H1 (cell line): ENCODE measurements at regions of chr11 and their contacts with region 1.

Region 1: GRCh38 chr11:22130462-22131053 is 62.3 kb upstream of the ANO5 start:
- DNase-seq: peak in 1 of 2 experiments; percentile 49
- H3K4me3 ChIP-seq: no peak overlapping the region
- H3K27ac ChIP-seq: no peak overlapping the region
- H3K4me1 ChIP-seq: no peaks in the 10 kb centered on the region
- H3K27me3 ChIP-seq: no peaks in the 10 kb centered on the region
- CTCF ChIP-seq: peak in 2 of 3 experiments; percentile 53 to 64; a peak in 2 of 4 replicates
- EP300 ChIP-seq: no peak
- POLR2A ChIP-seq: no peak
- RAD21 ChIP-seq: peak; percentile 85 to 89

Region 2: GRCh38 chr11:21811572-21811971 is 319.0 kb before region 1 on chr11:
- CTCF ChIA-PET with region 1: interaction called, 18 read pairs
- POLR2A ChIA-PET with region 1: no interaction called
- DNase-seq: peak in 1 of 2 experiments; percentile 60
- H3K4me3 ChIP-seq: no peak overlapping the region
- H3K27ac ChIP-seq: no peak overlapping the region
- H3K4me1 ChIP-seq: no peaks in the 10 kb centered on the region
- H3K27me3 ChIP-seq: no peaks in the 10 kb centered on the region
- CTCF ChIP-seq: peak; percentile 54 to 66 (median 60)
- EP300 ChIP-seq: no peak
- POLR2A ChIP-seq: no peak
- RAD21 ChIP-seq: peak; percentile 80 to 81

Region 3: DNA sequence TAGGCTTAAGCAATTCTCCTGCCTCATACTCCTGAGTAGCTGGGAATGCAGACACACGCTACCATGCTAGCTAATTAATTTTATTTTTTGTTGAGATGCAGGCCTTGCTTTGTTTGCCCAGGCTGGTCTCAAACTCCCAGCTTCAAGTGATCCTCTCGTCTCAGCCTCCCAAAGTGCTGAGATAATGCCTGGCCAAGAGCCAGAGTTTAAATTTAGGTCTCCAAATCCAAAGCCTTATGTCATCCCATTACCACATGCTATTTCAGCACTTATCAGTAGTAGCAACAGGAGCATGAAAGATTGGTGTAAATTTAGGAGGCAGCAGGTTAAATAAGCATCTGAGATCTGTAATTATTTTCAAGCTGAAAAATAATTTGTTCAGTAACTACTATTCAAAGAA is 263.8 kb before region 1 on chr11:
- CTCF ChIA-PET with region 1: interaction called, 34 read pairs
- POLR2A ChIA-PET with region 1: no interaction called
- DNase-seq: no peak
- H3K4me3 ChIP-seq: no peak overlapping the region
- H3K27ac ChIP-seq: no peak overlapping the region
- H3K4me1 ChIP-seq: no peaks in the 10 kb centered on the region
- H3K27me3 ChIP-seq: peaks cover 0 to 4% (median 0%) of the 10 kb centered on the region in 4 experiments; a peak in 1 of 7 replicates
- CTCF ChIP-seq: no peak
- EP300 ChIP-seq: no peak
- POLR2A ChIP-seq: no peak
- RAD21 ChIP-seq: no peak

Region 4: GRCh38 chr11:21877151-21877550 is 253.4 kb before region 1 on chr11:
- CTCF ChIA-PET with region 1: interaction called, 34 read pairs
- POLR2A ChIA-PET with region 1: no interaction called
- DNase-seq: no peak
- H3K4me3 ChIP-seq: no peak overlapping the region
- H3K27ac ChIP-seq: no peak overlapping the region
- H3K4me1 ChIP-seq: no peaks in the 10 kb centered on the region; a peak in 1 of 7 replicates
- H3K27me3 ChIP-seq: no peaks in the 10 kb centered on the region
- CTCF ChIP-seq: no peak
- EP300 ChIP-seq: no peak
- POLR2A ChIP-seq: no peak
- RAD21 ChIP-seq: no peak

Region 5: DNA sequence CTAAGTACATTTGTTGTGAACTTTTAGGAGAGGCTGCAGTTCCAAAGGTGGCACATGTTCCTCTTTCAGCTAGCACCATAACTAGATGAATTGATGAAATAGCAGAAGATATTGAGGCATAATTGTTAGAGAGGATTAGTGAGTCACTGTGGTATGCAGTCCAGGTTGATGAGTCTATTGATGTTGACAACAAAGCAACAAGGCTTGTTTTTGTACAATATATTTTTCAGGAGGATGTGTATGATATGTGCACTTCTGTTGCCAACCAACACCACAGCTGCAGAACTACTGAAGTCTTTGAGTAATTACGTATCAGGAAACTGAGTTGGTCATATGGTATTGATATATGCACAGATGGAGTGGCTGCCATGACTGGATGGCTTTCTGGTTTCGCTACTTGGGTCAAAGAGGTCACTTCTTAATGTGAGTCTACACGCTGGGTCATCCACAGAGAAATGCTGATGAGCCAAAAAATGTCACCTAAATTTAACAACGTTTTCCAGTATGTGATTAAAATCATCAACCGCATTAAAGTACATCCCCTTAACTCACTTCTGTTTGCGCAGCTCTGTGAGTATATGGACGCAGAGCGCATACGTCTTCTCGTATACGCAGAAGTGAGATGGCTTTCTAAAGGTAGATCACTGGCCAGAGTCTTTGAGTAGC is 199.0 kb before region 1 on chr11:
- CTCF ChIA-PET with region 1: interaction called, 10 read pairs
- POLR2A ChIA-PET with region 1: no interaction called
- DNase-seq: no peak
- H3K4me3 ChIP-seq: no peak overlapping the region
- H3K27ac ChIP-seq: no peak overlapping the region
- H3K4me1 ChIP-seq: no peaks in the 10 kb centered on the region
- H3K27me3 ChIP-seq: no peaks in the 10 kb centered on the region
- CTCF ChIP-seq: no peak
- EP300 ChIP-seq: no peak
- POLR2A ChIP-seq: no peak
- RAD21 ChIP-seq: no peak

Region 6: DNA sequence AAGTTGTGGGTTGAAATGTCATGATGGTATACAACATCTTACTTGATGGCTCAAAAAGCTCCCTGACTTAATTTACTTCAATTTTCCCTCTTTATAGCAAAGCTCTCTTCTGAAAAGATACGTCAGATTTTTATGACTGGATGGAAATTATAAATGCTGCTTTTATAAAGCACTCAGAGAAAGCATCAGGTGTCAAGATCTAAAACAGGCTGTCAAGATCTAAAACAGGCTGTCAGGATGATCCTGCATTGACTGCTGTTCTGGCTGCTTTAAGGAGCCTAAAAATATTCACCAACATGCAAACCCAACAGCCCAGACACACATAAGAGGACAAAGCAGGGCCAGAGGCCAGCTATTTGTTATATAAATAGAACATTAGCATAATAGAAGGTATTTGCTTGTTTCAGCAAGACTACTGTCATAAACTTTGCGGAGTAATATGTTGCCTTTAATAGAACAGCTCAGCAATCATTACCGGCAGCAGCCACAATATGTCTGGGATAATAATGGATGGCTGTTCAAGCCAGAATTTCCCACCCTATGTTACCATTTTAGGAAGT is 15.0 kb before region 1 on chr11:
- CTCF ChIA-PET with region 1: interaction called, 22 read pairs
- POLR2A ChIA-PET with region 1: no interaction called
- DNase-seq: no peak
- H3K4me3 ChIP-seq: no peak overlapping the region
- H3K27ac ChIP-seq: no peak overlapping the region
- H3K4me1 ChIP-seq: no peaks in the 10 kb centered on the region
- H3K27me3 ChIP-seq: no peaks in the 10 kb centered on the region
- CTCF ChIP-seq: no peak
- EP300 ChIP-seq: no peak
- POLR2A ChIP-seq: no peak
- RAD21 ChIP-seq: no peak